Esophagus muscularis mucosa (tissue), 4 donors: ENCODE measurements at regions of chr10 and their contacts with region 1.

Region 1: GRCh38 chr10:42782446-42783180 is at the start of gene BMS1:
- DNase-seq: peak; percentile 97
- H3K4me3 ChIP-seq: peak within 1 kb of the TSS; percentile 67 to 77 (median 74)
- H3K27ac ChIP-seq: peak within 1 kb of the TSS; percentile 89 to 94 (median 90)
- H3K4me1 ChIP-seq: peaks cover 15 to 23% (median 20%) of the 10 kb centered on the region in 4 donors
- H3K27me3 ChIP-seq: peaks cover 0 to 3% (median 0%) of the 10 kb centered on the region in 4 donors
- CTCF ChIP-seq: peak in 1 of 3 experiments; percentile 14
- EP300 ChIP-seq: no peak
- POLR2A ChIP-seq: peak; percentile 28
- total RNA-seq, gene BMS1: 10.4 to 14.6 (median 14.3) TPM

Region 2: GRCh38 chr10:42552493-42553407 is 229.9 kb before region 1 on chr10:
- intact Hi-C with region 1: loop called (anchors 5 kb)
- DNase-seq: peak; percentile 99
- H3K4me3 ChIP-seq: peak overlapping the region; percentile 79 to 86 (median 82)
- H3K27ac ChIP-seq: peak overlapping the region; percentile 81 to 83 (median 82)
- H3K4me1 ChIP-seq: peaks cover 10 to 26% (median 25%) of the 10 kb centered on the region in 4 donors
- H3K27me3 ChIP-seq: no peaks in the 10 kb centered on the region
- CTCF ChIP-seq: peak in 1 of 3 experiments; percentile 18
- EP300 ChIP-seq: peak; percentile 24
- POLR2A ChIP-seq: no peak

Region 3: GRCh38 chr10:42638055-42638820 is 144.4 kb before region 1 on chr10 and contains the start of gene ZNF33B:
- intact Hi-C with region 1: loop called (anchors 10 kb)
- DNase-seq: peak; percentile 96
- H3K4me3 ChIP-seq: peak within 1 kb of the TSS; percentile 75 to 98 (median 80)
- H3K27ac ChIP-seq: peak within 1 kb of the TSS; percentile 91 to 96 (median 94)
- H3K4me1 ChIP-seq: peaks cover 0 to 20% (median 10%) of the 10 kb centered on the region in 4 donors
- H3K27me3 ChIP-seq: no peaks in the 10 kb centered on the region
- CTCF ChIP-seq: no peak
- EP300 ChIP-seq: no peak
- POLR2A ChIP-seq: no peak
- total RNA-seq, gene ZNF33B: 10.8 to 18.4 (median 15.9) TPM

Region 4: DNA sequence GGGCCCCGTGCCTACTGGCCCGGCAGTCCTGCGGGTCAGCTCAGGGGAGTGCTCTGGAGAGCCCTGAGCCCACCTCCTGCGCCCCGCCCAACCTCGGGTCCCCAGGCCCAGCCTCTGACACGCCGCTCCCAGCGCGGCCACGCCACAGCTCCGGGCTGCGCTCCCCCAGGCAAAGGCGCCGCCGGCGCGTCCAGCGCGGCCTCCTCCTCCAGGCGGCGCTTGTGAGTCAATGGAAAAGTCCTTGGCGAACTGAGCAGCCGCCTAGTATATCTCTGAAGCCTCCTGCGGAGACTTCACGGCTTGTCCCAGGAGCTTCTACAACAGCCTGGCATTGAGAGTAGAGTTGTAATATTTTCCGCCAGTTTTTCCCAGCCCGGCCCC is 29.5 kb before region 1 on chr10:
- intact Hi-C with region 1: loop called (anchors 2 kb)
- DNase-seq: no peak
- H3K4me3 ChIP-seq: peak overlapping the region; percentile 53 to 70 (median 56)
- H3K27ac ChIP-seq: peak overlapping the region in 3 of 4 donors; percentile 45 to 57 (median 54)
- H3K4me1 ChIP-seq: peaks cover 14 to 36% (median 31%) of the 10 kb centered on the region in 4 donors
- H3K27me3 ChIP-seq: peaks cover 0 to 69% (median 26%) of the 10 kb centered on the region in 4 donors
- CTCF ChIP-seq: peak; percentile 81 to 93 (median 89)
- EP300 ChIP-seq: no peak
- POLR2A ChIP-seq: no peak

Region 5: GRCh38 chr10:42866115-42866995 is 83.7 kb after region 1 on chr10:
- intact Hi-C with region 1: no loop called
- DNase-seq: peak; percentile 92
- H3K4me3 ChIP-seq: peak overlapping the region; percentile 27 to 39 (median 35)
- H3K27ac ChIP-seq: no peak overlapping the region
- H3K4me1 ChIP-seq: peaks cover 13 to 18% (median 14%) of the 10 kb centered on the region in 4 donors
- H3K27me3 ChIP-seq: peaks cover 0 to 49% (median 5%) of the 10 kb centered on the region in 4 donors
- CTCF ChIP-seq: peak; percentile 45 to 80 (median 57)
- EP300 ChIP-seq: no peak
- POLR2A ChIP-seq: no peak